ENCODE measurements at regions of chr9 and their contacts with region 1.

Region 1: GRCh38 chr9:19239955-19240354 is 9.5 kb downstream of the DENND4C start:
- DNase-seq: no peak
- H3K4me3 ChIP-seq: no peak overlapping the region
- H3K27ac ChIP-seq: no peak overlapping the region
- H3K4me1 ChIP-seq: no peaks in the 10 kb centered on the region
- CTCF ChIP-seq: no peak

Region 2: DNA sequence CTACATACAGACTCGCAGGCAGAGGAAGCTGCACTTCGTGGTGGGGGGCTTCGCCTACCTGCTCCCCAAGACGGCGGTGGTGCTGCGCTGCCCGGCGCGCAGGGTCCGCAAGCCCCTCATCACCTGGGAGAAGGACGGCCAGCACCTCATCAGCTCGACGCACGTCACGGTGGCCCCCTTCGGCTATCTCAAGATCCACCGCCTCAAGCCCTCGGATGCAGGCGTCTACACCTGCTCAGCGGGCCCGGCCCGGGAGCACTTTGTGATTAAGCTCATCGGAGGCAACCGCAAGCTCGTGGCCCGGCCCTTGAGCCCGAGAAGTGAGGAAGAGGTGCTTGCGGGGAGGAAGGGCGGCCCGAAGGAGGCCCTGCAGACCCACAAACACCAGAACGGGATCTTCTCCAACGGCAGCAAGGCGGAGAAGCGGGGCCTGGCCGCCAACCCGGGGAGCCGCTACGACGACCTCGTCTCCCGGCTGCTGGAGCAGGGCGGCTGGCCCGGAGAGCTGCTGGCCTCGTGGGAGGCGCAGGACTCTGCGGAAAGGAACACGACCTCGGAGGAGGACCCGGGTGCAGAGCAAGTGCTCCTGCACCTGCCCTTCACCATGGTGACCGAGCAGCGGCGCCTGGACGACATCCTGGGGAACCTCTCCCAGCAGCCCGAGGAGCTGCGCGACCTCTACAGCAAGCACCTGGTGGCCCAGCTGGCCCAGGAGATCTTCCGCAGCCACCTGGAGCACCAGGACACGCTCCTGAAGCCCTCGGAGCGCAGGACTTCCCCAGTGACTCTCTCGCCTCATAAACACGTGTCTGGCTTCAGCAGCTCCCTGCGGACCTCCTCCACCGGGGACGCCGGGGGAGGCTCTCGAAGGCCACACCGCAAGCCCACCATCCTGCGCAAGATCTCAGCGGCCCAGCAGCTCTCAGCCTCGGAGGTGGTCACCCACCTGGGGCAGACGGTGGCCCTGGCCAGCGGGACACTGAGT is 462.8 kb before region 1 on chr9:
- CTCF ChIA-PET with region 1: no interaction called
- POLR2A ChIA-PET with region 1: no interaction called
- intact Hi-C with region 1: no loop called
- DNase-seq: no peak
- H3K4me3 ChIP-seq: no peak overlapping the region
- H3K27ac ChIP-seq: no peak overlapping the region
- H3K4me1 ChIP-seq: no peaks in the 10 kb centered on the region
- CTCF ChIP-seq: no peak

Region 3: DNA sequence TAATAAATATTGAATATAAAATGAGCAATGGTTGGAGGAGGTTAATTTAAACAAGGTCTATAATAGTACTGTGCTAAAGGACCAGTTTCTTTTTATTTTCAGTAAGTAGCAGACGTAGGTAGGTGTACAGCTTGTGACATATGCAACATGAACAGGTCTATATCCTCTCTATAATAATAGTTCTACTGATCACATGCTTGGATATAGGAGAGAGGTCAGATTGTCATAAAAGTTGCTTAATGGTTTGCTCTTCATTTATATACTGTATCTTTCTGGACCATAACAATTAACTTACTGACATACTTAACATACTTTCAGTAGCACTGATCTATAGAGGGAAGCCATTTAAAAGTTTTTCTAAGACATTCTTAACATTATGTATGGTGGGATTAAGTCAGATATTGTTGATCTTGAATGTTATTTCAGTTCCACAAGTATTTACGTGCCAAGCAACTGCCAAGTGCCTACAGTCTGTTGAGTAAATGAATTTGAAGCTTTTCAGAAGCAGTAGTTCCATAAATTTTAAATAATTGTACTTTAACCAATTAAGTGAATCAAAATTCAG is 58.6 kb after region 1 on chr9:
- CTCF ChIA-PET with region 1: no interaction called
- POLR2A ChIA-PET with region 1: interaction called, 4 read pairs
- intact Hi-C with region 1: loop called (anchors 5 kb)
- DNase-seq: no peak
- H3K4me3 ChIP-seq: no peak overlapping the region
- H3K27ac ChIP-seq: no peak overlapping the region
- H3K4me1 ChIP-seq: no peaks in the 10 kb centered on the region
- CTCF ChIP-seq: no peak